ENCODE measurements at regions of chr17 and their contacts with region 1.

Region 1: DNA sequence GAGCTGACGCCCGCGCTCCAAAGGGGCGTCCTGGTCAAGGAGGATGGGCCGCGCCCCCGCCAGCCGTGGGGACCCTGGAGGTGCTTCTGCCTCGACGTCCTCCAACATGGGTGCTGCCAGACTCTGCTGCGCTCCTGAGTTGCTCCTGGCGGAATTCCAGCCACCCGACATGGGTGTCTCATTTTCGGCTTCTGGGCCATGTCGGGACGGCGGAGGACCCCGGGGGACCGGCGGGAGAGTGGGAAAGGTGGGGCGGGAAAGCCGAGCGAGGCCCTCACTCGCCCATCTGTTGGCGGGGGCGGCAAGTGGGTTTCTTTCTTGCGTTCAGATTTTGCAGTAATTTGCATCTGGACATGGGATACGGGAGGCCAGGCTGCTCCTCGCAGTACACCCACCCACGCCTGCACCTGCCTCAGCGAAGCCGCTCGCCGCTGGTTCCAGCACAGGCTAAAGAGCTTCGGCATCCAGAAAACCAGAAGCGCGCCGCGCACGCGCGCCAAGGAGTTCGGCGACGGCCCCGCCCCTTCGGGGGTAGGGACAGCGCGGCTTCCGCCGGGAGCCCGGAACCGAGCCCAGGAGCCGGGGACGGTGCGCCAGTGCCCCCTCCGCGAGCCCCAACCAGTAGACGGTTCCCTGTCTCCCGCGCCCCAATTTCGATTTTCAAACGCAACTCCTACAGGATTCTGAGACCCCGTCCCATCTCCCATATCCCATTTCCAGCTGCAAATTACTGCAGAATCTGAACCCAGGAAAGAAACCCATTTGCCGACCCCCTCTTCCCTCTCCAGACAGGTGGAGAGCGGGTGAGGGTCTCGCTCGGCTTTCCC is at the start of gene ARMC7:
- DNase-seq: peak; percentile 92
- H3K4me3 Mint-ChIP-seq: peak within 1 kb of the TSS; percentile 84
- H3K27ac Mint-ChIP-seq: peak within 1 kb of the TSS; percentile 79
- H3K4me1 Mint-ChIP-seq: peaks cover 41% of the 10 kb centered on the region
- H3K27me3 Mint-ChIP-seq: no peaks in the 10 kb centered on the region
- total RNA-seq, gene ARMC7: 17.1 to 17.9 TPM

Region 2: DNA sequence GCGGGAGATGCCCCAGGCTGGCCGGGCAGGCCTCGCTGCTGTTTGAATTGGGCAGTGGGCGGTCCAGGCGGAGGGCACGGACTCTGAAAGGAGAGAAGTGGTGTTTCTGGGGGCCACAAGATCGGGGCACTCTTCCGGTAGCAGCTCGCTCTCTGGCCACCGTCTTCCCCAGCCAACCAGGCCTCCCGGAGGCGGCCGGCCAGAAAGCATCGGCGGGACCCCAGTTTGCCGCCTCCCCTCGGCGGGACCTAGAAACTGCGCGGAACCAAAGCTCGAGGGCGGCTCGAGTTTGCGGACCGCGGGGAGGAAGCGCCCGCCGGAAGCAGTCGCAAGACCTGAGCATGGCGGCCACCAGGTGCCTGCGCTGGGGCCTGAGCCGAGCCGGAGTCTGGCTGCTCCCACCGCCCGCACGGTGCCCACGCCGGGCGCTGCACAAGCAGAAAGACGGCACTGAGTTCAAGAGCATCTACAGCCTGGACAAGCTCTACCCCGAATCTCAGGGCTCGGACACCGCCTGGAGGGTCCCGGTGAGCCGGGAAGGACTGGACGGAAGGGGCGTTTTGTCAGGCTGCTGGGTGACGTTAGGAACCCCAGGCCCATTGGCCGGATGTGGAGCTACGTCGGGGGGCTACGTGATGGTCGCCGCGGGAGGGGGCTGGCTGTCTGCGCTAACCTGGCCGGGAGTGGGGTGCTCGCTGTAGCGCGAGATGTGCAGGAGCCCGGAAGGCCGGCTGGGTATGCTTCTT is 97.1 kb before region 1 on chr17 and contains the start of gene MRPL58:
- CTCF ChIA-PET with region 1: interaction called, 18 read pairs
- POLR2A ChIA-PET with region 1: interaction called, 13 read pairs
- DNase-seq: peak; percentile 86
- H3K4me3 Mint-ChIP-seq: peak within 1 kb of the TSS; percentile 93
- H3K27ac Mint-ChIP-seq: peak within 1 kb of the TSS; percentile 84
- H3K4me1 Mint-ChIP-seq: peaks cover 30% of the 10 kb centered on the region
- H3K27me3 Mint-ChIP-seq: no peaks in the 10 kb centered on the region
- total RNA-seq, gene MRPL58: 45.4 to 49.6 TPM

Region 3: DNA sequence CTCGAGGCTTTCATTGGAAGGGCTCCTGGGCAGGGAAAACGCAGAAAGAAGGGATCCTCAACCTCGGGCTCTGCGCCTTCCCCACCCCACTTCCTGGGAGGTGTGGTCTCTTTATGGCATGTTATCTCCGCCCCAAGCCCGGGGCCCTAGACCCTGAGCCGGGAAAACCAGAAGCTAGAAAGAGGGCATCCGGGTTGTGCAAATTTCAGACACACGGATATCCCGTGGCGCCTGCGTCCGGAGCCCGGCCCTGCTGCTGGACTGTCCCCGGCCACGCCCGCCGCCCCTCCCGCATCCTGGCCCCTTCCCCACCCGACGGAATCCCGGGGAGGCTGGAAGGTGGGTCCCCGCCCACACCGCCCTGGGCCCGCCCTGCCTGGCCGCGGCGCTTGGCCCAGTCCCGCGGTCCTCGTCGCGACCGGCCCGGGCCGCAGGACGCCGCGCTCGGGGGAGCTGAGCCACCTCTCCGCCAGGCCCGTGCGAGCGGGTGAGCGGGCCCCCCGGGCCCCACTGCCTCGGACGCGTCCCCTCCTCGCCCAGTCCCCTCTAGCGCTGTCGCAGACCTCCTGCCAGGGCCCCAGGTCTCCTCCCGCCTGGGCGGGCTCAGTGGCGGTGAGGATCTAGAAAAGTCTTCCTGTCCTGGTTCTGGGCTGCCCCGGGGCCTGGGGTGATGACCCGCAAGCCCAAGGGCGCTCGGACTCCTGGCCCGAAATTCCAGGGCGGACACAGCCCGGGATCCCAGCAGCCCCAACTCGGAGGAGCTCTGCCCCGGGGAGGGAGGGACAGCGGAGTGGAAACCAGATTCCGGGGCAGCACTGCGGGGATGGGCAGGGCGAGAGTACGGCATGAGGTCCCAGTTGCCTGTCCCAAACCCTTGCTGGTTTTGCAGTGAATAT is 21.8 kb before region 1 on chr17 and contains the start of gene SLC16A5:
- CTCF ChIA-PET with region 1: interaction called, 5 read pairs
- POLR2A ChIA-PET with region 1: interaction called, 11 read pairs
- DNase-seq: peak; percentile 61
- H3K4me3 Mint-ChIP-seq: peak within 1 kb of the TSS; percentile 75
- H3K27ac Mint-ChIP-seq: peak within 1 kb of the TSS; percentile 58
- H3K4me1 Mint-ChIP-seq: peaks cover 48% of the 10 kb centered on the region
- H3K27me3 Mint-ChIP-seq: no peaks in the 10 kb centered on the region
- total RNA-seq, gene SLC16A5: 10.4 TPM

Region 4: GRCh38 chr17:75147878-75148546 is 38.4 kb after region 1 on chr17:
- CTCF ChIA-PET with region 1: interaction called, 13 read pairs
- POLR2A ChIA-PET with region 1: no interaction called
- DNase-seq: no peak
- H3K4me3 Mint-ChIP-seq: no peak overlapping the region
- H3K27ac Mint-ChIP-seq: peak overlapping the region; percentile 21
- H3K4me1 Mint-ChIP-seq: peaks cover 39% of the 10 kb centered on the region
- H3K27me3 Mint-ChIP-seq: no peaks in the 10 kb centered on the region

Region 5: DNA sequence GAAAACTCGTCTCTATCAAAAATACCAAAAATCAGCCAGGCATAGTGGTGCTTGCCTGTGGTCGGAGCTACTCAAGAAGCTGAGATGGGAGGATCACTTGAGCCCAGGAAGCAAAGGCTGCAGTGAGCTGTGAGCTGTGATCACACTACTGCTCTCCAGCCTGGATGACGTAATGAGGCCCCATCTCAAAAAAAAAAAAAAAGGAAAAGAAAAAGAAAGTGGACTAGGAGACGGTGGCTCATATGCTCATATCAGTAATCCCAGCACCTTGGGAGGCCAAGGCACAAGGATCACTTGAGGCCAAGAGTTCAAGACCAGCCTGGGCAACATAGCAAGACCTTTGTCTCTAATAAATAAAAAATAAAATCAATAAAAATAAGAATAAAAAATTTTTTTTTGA is 82.0 kb after region 1 on chr17:
- CTCF ChIA-PET with region 1: interaction called, 17 read pairs
- POLR2A ChIA-PET with region 1: no interaction called
- DNase-seq: no peak
- H3K4me3 Mint-ChIP-seq: no peak overlapping the region
- H3K27ac Mint-ChIP-seq: no peak overlapping the region
- H3K4me1 Mint-ChIP-seq: peaks cover 13% of the 10 kb centered on the region
- H3K27me3 Mint-ChIP-seq: no peaks in the 10 kb centered on the region

Region 6: GRCh38 chr17:75271233-75271954 is 161.8 kb after region 1 on chr17:
- CTCF ChIA-PET with region 1: interaction called, 17 read pairs
- POLR2A ChIA-PET with region 1: interaction called, 7 read pairs
- DNase-seq: peak; percentile 92
- H3K4me3 Mint-ChIP-seq: peak overlapping the region; percentile 85
- H3K27ac Mint-ChIP-seq: peak overlapping the region; percentile 89
- H3K4me1 Mint-ChIP-seq: peaks cover 47% of the 10 kb centered on the region
- H3K27me3 Mint-ChIP-seq: no peaks in the 10 kb centered on the region

Measured in activated CD4-positive, alpha-beta memory T cell treated with anti-CD3 and anti-CD28 coated beads, Interleukin-2, amount 10 ng/mL, durations not matched to agents 7 days and 5 days (primary cell).